Activated CD8-positive, alpha-beta T cell treated with anti-CD3 and anti-CD28 coated beads, Interleukin-2, amount 10 ng/mL, durations not matched to agents 7 days and 5 days (primary cell): ENCODE measurements at regions of chr4 and their contacts with region 1.

Region 1: GRCh38 chr4:36343501-36344175 is 62.2 kb downstream of the DTHD1 start:
- DNase-seq: no peak
- ATAC-seq: no peak
- H3K4me3 Mint-ChIP-seq: no peak overlapping the region
- H3K27ac Mint-ChIP-seq: no peak overlapping the region
- H3K4me1 Mint-ChIP-seq: peaks cover 5% of the 10 kb centered on the region
- H3K27me3 Mint-ChIP-seq: no peaks in the 10 kb centered on the region

Region 2: GRCh38 chr4:36230534-36230933 is 113.1 kb before region 1 on chr4:
- CTCF ChIA-PET with region 1: no interaction called
- POLR2A ChIA-PET with region 1: no interaction called
- DNase-seq: no peak
- ATAC-seq: no peak
- H3K4me3 Mint-ChIP-seq: no peak overlapping the region
- H3K27ac Mint-ChIP-seq: no peak overlapping the region
- H3K4me1 Mint-ChIP-seq: peaks cover 25% of the 10 kb centered on the region
- H3K27me3 Mint-ChIP-seq: no peaks in the 10 kb centered on the region

Region 3: DNA sequence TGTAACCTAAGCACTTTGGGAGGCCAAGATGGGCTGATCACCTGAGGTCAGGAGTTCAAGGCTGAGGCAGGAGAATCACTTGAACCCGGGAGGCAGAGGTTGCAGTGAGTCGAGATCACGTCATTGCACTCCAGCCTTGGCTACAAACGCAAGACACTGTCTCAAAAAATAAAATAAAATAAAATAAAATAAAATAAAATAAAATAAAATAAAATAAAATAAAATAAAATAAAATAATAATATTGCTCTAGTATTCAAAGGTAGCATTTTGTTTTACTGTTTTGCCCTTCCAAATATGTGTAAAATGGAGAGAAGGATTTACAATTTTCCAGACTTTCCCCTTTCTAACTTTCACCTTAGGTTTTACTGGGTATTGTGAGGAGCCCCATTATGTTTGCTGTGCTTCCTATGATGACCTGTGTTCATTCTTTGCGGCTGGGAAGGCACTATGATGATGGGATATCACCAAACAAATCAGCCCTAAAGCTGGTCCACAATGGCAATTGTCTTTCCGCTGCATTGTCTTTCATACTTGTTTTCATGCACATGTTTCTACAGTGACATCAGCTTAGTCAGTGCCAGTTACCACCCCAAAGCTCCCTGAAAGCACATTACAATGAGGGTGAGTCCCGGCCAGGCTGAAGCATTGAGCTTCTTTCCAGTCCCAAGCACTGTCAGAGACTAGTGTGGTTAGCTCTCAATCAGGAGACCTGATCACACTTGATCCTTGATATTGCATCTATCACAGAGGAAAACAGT is 11.4 kb before region 1 on chr4:
- CTCF ChIA-PET with region 1: interaction called, 15 read pairs
- POLR2A ChIA-PET with region 1: no interaction called
- DNase-seq: no peak
- ATAC-seq: no peak
- H3K4me3 Mint-ChIP-seq: no peak overlapping the region
- H3K27ac Mint-ChIP-seq: no peak overlapping the region
- H3K4me1 Mint-ChIP-seq: peaks cover 26% of the 10 kb centered on the region
- H3K27me3 Mint-ChIP-seq: no peaks in the 10 kb centered on the region